GM13977 (cell line): ENCODE measurements at regions of chr5 and their contacts with region 1.

Region 1: GRCh38 chr5:64784451-64785025 is 15.8 kb downstream of the CWC27 start:
- DNase-seq: peak; percentile 12
- CTCF ChIP-seq: peak; percentile 85

Region 2: DNA sequence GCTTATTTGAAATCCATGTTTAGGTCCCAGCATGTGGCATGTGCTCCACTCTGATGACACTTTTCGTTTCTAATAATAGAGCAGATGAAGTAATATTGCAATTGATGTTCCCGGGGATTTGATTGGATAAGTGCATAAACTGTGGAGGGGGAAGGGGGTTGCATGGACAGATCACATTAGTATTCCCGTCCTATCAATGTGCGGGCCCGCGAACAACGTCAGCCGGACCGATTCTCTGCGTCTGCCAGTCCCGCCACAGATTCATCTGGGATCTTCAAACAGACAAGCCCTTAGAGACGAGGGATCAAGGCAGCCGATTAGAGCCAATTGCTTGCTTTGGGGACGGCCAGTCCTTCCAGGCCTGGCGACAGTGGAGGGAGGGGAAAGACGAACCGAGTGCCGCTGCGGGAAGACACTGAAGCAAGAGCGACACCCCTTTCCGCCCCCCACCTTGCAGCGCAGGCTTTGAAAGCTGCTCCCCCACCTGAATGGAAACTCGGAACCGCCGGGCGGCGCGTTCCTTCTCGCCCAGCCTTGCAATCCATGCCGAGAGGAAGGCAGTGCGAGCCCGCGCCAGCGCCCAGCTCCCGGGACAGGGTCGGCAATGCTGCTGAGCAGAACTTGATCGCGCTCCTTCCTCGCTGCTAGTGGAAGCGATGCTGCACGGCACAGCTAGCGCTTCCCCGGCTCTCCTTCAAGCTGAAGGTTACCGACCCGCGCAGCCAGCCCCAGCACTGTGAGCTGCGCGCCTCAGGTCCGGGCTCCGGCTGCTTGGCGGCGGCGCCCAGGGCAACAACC is 278.6 kb before region 1 on chr5 and contains the start of gene RGS7BP:
- in situ Hi-C with region 1: no loop called
- DNase-seq: peak; percentile 16
- CTCF ChIP-seq: no peak

Region 3: DNA sequence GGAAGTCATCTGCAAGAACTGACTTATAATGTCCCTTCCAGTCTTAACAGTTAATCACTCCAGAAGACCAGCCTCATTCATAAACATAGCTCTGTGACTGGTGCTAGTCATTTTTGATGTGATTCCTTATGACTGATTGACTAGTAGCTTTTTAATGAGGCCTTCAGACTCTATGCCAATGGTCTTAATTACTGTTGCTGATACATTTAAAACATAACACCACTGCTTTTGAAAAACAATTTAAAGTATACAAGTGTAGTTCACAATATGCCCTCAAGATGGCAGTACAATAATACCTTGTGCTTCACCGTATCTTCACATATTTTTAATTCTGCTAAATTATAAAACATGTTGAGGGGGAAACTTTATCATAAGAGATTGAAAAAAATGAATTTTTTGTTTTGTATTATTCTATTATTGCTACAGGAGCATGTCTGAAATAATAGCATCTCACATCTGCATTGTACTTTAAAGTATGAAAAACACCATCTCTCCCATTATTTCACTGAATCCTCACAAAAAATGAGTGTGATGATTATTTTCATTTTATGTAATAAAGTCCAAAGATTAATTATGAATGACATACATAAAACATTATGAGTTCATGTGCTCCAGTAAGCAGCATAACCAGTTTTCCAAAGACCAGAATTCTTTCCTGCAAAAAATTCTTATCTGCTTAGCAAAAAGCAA is 149.4 kb before region 1 on chr5:
- in situ Hi-C with region 1: loop called (anchors 5 kb)
- DNase-seq: peak; percentile 11
- CTCF ChIP-seq: peak; percentile 68

Region 4: GRCh38 chr5:66193419-66193818 is 1408.9 kb after region 1 on chr5:
- in situ Hi-C with region 1: no loop called
- DNase-seq: no peak
- CTCF ChIP-seq: no peak